ENCODE measurements at regions of chr2 and their contacts with region 1.

Region 1: GRCh38 chr2:186503848-186504606 is 18.0 kb downstream of the ZC3H15 start:
- DNase-seq: no peak
- H3K4me3 Mint-ChIP-seq: no peak overlapping the region
- H3K27ac Mint-ChIP-seq: no peak overlapping the region
- H3K4me1 Mint-ChIP-seq: peaks cover 7% of the 10 kb centered on the region
- H3K27me3 Mint-ChIP-seq: no peaks in the 10 kb centered on the region

Region 2: GRCh38 chr2:186493564-186494085 is 10.4 kb before region 1 on chr2:
- CTCF ChIA-PET with region 1: interaction called, 24 read pairs
- POLR2A ChIA-PET with region 1: interaction called, 4 read pairs
- intact Hi-C with region 1: no loop called
- DNase-seq: no peak
- H3K4me3 Mint-ChIP-seq: no peak overlapping the region
- H3K27ac Mint-ChIP-seq: no peak overlapping the region
- H3K4me1 Mint-ChIP-seq: peaks cover 64% of the 10 kb centered on the region
- H3K27me3 Mint-ChIP-seq: no peaks in the 10 kb centered on the region